Heart left ventricle (tissue), 16 donors: ENCODE measurements at regions of chr5 and their contacts with region 1.

Region 1: GRCh38 chr5:41264019-41264418 is 50.7 kb upstream of the C6 start:
- DNase-seq: no peak
- ATAC-seq: peak; percentile 70 to 92 (median 82)
- H3K4me3 ChIP-seq: no peak overlapping the region
- H3K27ac ChIP-seq: peak overlapping the region; percentile 12 to 51 (median 40)
- H3K4me1 ChIP-seq: peaks cover 0 to 23% (median 16%) of the 10 kb centered on the region in 12 donors
- H3K27me3 ChIP-seq: no peaks in the 10 kb centered on the region
- CTCF ChIP-seq: no peak
- POLR2A ChIP-seq: no peak

Region 2: DNA sequence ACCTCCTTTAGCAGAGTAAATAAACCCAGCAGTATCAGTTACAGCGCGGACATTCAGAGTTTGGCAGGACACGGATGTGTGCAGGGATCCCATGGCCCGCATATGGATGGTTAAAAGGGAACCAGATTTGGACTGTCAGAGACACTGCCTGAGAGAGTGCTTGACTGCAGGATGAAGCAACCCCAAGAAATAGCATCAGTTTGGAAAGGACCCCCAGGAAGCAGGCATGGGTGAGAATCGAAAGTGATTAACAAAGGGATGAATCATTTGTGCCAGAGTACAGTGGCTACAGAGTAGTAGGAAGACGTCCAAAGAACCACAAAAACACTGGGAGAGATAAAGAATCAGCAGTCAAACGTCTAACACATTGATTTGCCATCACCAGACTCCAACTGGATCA is 349.2 kb before region 1 on chr5:
- intact Hi-C with region 1: loop called in 1 of 10 experiments (anchors 10 kb)
- DNase-seq: no peak
- ATAC-seq: peak in 3 of 4 donors; percentile 39 to 76 (median 64)
- H3K4me3 ChIP-seq: peak overlapping the region in 9 of 12 donors; percentile 5 to 47 (median 20)
- H3K27ac ChIP-seq: peak overlapping the region in 9 of 12 donors; percentile 8 to 65 (median 44)
- H3K4me1 ChIP-seq: peaks cover 0 to 40% (median 9%) of the 10 kb centered on the region in 12 donors
- H3K27me3 ChIP-seq: no peaks in the 10 kb centered on the region
- CTCF ChIP-seq: no peak
- POLR2A ChIP-seq: no peak

Region 3: DNA sequence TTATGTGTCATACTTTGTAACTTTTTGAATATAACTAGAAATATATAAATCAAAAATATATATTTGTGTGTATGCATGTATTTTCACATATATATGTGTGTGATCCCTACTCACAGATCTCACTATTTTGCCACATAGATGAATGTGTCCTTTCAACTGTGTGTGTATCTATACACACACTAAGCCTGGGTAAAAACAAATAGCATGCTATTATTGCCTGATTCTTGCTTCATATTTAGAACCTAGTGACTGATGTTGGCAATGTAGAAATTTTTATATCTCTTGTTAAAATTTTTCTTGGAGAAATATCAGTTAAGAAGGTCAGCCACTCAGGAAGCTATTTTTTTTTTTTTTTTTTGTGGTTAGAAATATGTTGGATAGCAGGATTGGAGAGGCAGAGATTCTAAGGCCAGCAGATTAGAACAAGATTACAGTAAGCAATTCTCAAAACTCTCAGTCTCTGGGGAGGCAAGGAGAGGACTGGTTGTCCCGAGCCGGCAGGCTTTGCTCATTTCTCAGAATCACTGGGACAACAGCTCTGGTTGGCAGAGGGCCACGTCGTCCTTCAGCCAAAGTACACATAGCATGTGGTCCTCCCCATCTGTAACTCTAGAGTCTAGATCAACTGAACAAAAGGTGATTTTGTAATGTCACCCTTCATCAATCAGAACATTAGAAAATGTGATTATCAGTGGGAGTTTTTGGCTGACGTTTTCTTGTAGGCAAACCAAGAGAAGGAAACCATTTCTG is 70.4 kb before region 1 on chr5:
- intact Hi-C with region 1: loop called in 2 of 10 experiments (anchors 5 to 10 kb)
- DNase-seq: peak; percentile 94 to 99 (median 97)
- ATAC-seq: peak; percentile 96 to 98 (median 97)
- H3K4me3 ChIP-seq: no peak overlapping the region
- H3K27ac ChIP-seq: peak overlapping the region; percentile 58 to 85 (median 78)
- H3K4me1 ChIP-seq: peaks cover 0 to 30% (median 16%) of the 10 kb centered on the region in 12 donors
- H3K27me3 ChIP-seq: no peaks in the 10 kb centered on the region
- CTCF ChIP-seq: no peak
- POLR2A ChIP-seq: no peak

Region 4: GRCh38 chr5:41199660-41200059 is 64.4 kb before region 1 on chr5:
- intact Hi-C with region 1: loop called in 3 of 10 experiments (anchors 5 to 10 kb)
- DNase-seq: peak in 2 of 5 donors; percentile 24 to 39
- ATAC-seq: peak; percentile 75 to 88 (median 80)
- H3K4me3 ChIP-seq: no peak overlapping the region
- H3K27ac ChIP-seq: peak overlapping the region; percentile 1 to 77 (median 59)
- H3K4me1 ChIP-seq: peaks cover 0 to 23% (median under 1%) of the 10 kb centered on the region in 12 donors
- H3K27me3 ChIP-seq: no peaks in the 10 kb centered on the region
- CTCF ChIP-seq: no peak
- POLR2A ChIP-seq: no peak

Region 5: GRCh38 chr5:41641621-41642020 is 377.6 kb after region 1 on chr5:
- intact Hi-C with region 1: loop called in 1 of 10 experiments (anchors 10 kb)
- DNase-seq: no peak
- ATAC-seq: no peak
- H3K4me3 ChIP-seq: no peak overlapping the region
- H3K27ac ChIP-seq: no peak overlapping the region
- H3K4me1 ChIP-seq: no peaks in the 10 kb centered on the region
- H3K27me3 ChIP-seq: no peaks in the 10 kb centered on the region
- CTCF ChIP-seq: peak in 8 of 12 donors; percentile 9 to 43 (median 26)
- POLR2A ChIP-seq: no peak

Region 6: DNA sequence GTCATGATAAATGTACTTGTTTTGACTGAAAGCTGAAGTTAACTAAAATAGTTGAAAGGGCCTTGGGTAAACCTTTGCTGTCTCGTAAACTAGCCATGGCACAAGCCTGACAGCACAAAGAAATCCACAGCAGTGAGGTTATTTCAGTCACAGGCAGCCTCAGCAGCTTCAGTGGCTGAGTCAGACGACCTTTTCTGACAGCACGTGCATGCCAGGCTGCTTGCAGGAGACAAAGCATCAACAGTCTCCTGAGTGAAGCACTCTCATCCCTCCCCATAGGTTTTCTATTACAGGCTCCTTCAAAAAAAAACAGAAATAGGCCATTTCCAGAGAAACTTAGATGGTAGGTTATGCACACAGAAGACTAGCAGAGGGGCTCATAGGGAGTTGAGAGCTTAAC is 571.6 kb after region 1 on chr5:
- intact Hi-C with region 1: loop called in 1 of 10 experiments (anchors 10 kb)
- DNase-seq: peak; percentile 55 to 84 (median 64)
- ATAC-seq: peak; percentile 94 to 97 (median 96)
- H3K4me3 ChIP-seq: no peak overlapping the region
- H3K27ac ChIP-seq: peak overlapping the region in 11 of 12 donors; percentile 1 to 85 (median 65)
- H3K4me1 ChIP-seq: peaks cover 0 to 28% (median 15%) of the 10 kb centered on the region in 12 donors
- H3K27me3 ChIP-seq: no peaks in the 10 kb centered on the region
- CTCF ChIP-seq: no peak
- POLR2A ChIP-seq: no peak